Left lung (tissue), 14 donors: ENCODE measurements at regions of chr12 and their contacts with region 1.

Region 1: GRCh38 chr12:49188914-49189367 is at the start of gene TUBA1A:
- DNase-seq: peak; percentile 89 to 99 (median 96)
- ATAC-seq: peak; percentile 92
- H3K4me3 ChIP-seq: peak within 1 kb of the TSS; percentile 86 to 90
- H3K27ac ChIP-seq: peak within 1 kb of the TSS; percentile 100
- H3K4me1 ChIP-seq: peaks cover 4 to 25% of the 10 kb centered on the region in 2 donors
- H3K27me3 ChIP-seq: no peaks in the 10 kb centered on the region
- CTCF ChIP-seq: no peak
- polyA plus RNA-seq, gene TUBA1A: 412 to 675 (median 534) TPM

Region 2: DNA sequence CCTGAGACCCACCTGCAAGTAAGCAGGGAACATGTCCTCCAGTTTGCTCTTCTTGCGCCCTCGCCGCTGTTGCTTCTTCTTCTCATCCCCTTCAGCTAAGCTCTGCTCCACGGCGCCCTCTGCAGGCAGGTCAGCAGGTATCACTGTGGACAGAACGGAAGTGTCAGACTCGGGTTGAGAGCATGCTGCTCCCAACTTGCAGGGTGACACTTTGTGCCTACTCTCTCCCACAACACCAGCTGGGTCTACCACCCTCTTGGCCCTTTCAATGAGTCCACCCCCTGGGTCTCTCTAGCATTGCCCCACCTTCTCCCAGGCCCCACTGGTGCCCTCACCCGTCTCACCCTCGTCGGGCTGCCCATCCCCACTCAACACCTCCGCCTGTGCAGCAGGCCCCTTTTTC is 145.1 kb before region 1 on chr12:
- intact Hi-C with region 1: no loop called
- DNase-seq: peak in 2 of 4 donors; percentile 64 to 91
- ATAC-seq: peak; percentile 58
- H3K4me3 ChIP-seq: no peak overlapping the region
- H3K27ac ChIP-seq: no peak overlapping the region
- H3K4me1 ChIP-seq: no peaks in the 10 kb centered on the region
- H3K27me3 ChIP-seq: no peaks in the 10 kb centered on the region
- CTCF ChIP-seq: peak; percentile 39 to 67

Region 3: GRCh38 chr12:49130151-49131050 is 58.5 kb before region 1 on chr12:
- intact Hi-C with region 1: loop called in 1 of 2 experiments (anchors 10 kb)
- DNase-seq: peak; percentile 87 to 98 (median 96)
- ATAC-seq: peak; percentile 84
- H3K4me3 ChIP-seq: peak overlapping the region; percentile 86 to 97
- H3K27ac ChIP-seq: peak overlapping the region; percentile 100
- H3K4me1 ChIP-seq: peaks cover 18 to 37% of the 10 kb centered on the region in 2 donors
- H3K27me3 ChIP-seq: no peaks in the 10 kb centered on the region
- CTCF ChIP-seq: peak; percentile 86 to 92

Region 4: GRCh38 chr12:49347384-49348237 is 158.7 kb after region 1 on chr12:
- intact Hi-C with region 1: no loop called
- DNase-seq: peak; percentile 72 to 95 (median 84)
- ATAC-seq: peak; percentile 88
- H3K4me3 ChIP-seq: peak overlapping the region; percentile 11 to 18
- H3K27ac ChIP-seq: no peak overlapping the region
- H3K4me1 ChIP-seq: peaks cover 34 to 46% of the 10 kb centered on the region in 2 donors
- H3K27me3 ChIP-seq: peaks cover 53 to 100% of the 10 kb centered on the region in 2 donors
- CTCF ChIP-seq: peak; percentile 92 to 94